Gastrocnemius medialis (tissue), 4 donors: ENCODE measurements at regions of chr3 and their contacts with region 1.

Region 1: GRCh38 chr3:21894459-21895340 is 143.7 kb upstream of the ZNF385D start:
- DNase-seq: no peak
- ATAC-seq: no peak
- H3K4me3 ChIP-seq: no peak overlapping the region
- H3K27ac ChIP-seq: no peak overlapping the region
- H3K4me1 ChIP-seq: peaks cover 0 to 9% of the 10 kb centered on the region in 2 donors
- H3K27me3 ChIP-seq: no peaks in the 10 kb centered on the region
- CTCF ChIP-seq: peak; percentile 10 to 71 (median 53)
- POLR2A ChIP-seq: no peak

Region 2: GRCh38 chr3:20340324-20340928 is 1554.3 kb before region 1 on chr3:
- in situ Hi-C with region 1: loop called in 2 of 4 experiments (anchors 25 kb)
- intact Hi-C with region 1: no loop called
- DNase-seq: peak; percentile 15 to 44
- ATAC-seq: peak; percentile 47 to 51
- H3K4me3 ChIP-seq: peak overlapping the region in 1 of 4 donors; percentile 36
- H3K27ac ChIP-seq: no peak overlapping the region
- H3K4me1 ChIP-seq: no peaks in the 10 kb centered on the region
- H3K27me3 ChIP-seq: no peaks in the 10 kb centered on the region
- CTCF ChIP-seq: peak; percentile 61 to 85 (median 76)
- POLR2A ChIP-seq: no peak

Region 3: DNA sequence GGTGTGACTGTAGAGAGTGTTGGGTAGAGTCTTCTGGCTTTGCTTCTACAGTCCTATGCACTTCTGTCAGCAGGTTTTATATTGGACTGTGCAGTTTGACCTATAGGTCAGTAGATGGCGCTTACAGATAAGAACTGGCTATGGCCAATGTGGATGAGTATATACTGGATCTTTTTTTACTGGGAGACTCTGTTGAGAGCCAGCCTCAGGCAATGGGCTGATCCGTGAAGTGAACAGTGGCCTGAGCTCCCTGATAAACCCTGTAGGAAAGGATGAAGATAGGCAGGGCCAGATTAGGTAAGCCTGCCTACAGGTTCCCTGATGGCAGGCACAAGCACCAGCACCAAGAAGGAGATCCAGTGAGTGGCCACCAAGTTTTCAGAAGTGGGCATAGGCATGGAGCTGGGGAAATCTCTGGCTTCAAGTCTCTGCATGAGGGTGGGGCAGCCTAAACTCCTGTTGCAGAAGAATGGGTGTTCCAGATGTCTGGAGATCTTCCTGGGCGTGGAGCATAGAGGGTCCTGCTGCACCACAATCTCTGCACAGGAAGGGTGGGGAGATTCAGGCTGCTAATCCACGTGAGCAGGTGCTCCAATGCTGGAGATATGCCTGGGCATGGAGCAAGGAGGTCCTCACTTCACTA is 1382.7 kb before region 1 on chr3:
- in situ Hi-C with region 1: loop called in 1 of 4 experiments (anchors 25 kb)
- intact Hi-C with region 1: loop called (anchors 5 kb)
- DNase-seq: no peak
- ATAC-seq: peak; percentile 75 to 81
- H3K4me3 ChIP-seq: no peak overlapping the region
- H3K27ac ChIP-seq: no peak overlapping the region
- H3K4me1 ChIP-seq: no peaks in the 10 kb centered on the region
- H3K27me3 ChIP-seq: no peaks in the 10 kb centered on the region
- CTCF ChIP-seq: peak; percentile 48 to 70 (median 52)
- POLR2A ChIP-seq: no peak

Region 4: DNA sequence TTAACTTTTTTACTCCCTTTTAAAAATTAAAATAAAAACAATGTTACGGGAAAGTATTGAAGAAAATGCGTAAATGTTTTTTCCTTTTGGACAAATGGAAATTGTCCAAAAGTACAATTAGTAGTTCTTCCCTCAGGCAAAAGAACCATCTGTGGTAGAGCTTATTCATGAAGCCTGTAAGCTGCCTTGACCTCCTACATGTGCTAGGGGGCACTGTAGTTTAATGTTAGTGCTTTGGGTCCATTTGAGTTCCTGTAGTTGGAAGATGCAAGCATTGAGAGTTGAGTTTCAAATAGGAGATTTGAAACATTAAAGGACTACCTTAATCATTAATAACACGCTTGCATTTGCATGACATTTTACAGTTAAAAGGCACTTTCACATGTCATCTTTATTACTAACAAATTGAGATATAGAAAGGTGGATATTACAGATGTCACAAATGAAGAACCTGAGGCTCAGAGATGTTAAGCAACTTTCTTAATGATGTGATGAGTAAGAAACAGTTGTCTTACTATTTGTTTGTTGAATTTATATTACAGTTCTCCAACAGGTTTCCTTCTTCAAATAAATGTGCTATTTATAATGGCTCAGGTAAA is 141.9 kb before region 1 on chr3:
- in situ Hi-C with region 1: loop called in 3 of 4 experiments (anchors 10 kb)
- intact Hi-C with region 1: loop called (anchors 1 kb)
- DNase-seq: peak in 1 of 2 donors; percentile 12
- ATAC-seq: peak; percentile 49 to 67
- H3K4me3 ChIP-seq: no peak overlapping the region
- H3K27ac ChIP-seq: peak overlapping the region in 1 of 4 donors; percentile 4
- H3K4me1 ChIP-seq: peaks cover 5 to 12% of the 10 kb centered on the region in 2 donors
- H3K27me3 ChIP-seq: peaks cover 0 to 4% (median 0%) of the 10 kb centered on the region in 3 donors
- CTCF ChIP-seq: peak in 4 of 5 experiments; percentile 31 to 58 (median 53)
- POLR2A ChIP-seq: no peak